ENCODE measurements at regions of chr3 and their contacts with region 1.

Region 1: DNA sequence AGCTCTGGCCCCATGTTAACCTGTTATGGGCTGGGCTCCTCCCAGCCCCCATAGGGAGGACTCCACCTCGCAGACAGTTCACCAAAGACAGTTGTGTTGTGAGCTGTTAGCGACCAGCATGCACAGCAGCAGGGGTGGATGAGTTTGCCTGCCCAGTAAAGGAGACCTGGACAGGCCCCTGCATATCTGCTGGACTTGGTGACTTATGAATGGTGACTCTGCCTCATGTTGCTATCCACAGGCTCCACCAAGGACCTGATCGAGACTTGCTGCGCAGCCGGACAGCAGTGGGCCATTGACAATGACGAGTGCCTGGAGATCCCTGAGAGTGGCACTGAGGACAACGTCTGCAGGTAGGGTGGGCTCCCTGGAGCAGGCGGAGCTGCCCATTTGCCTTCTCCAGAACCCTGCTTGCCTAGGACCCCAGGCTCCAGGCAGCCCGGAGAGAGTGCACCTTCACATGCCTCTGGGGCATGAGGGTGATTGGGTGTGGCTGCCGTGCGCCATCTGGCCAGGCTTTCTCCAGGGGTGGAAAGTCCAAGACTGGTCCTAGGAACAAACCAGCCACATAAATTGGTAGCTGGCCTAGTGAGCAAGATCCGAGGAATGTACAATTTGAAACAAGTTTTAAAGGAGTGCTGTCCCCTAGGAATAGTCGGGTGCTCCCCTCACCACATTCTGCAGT is 59.0 kb downstream of the FBLN2 start:
- DNase-seq: peak in 1 of 2 experiments; percentile 28
- H3K4me3 ChIP-seq: no peak overlapping the region
- H3K27ac ChIP-seq: no peak overlapping the region
- H3K4me1 ChIP-seq: no peaks in the 10 kb centered on the region
- H3K27me3 ChIP-seq: no peaks in the 10 kb centered on the region
- CTCF ChIP-seq: no peak

Region 2: GRCh38 chr3:13593615-13594014 is 14.3 kb before region 1 on chr3:
- CTCF ChIA-PET with region 1: no interaction called
- POLR2A ChIA-PET with region 1: interaction called, 10 read pairs
- intact Hi-C with region 1: no loop called
- DNase-seq: no peak
- H3K4me3 ChIP-seq: no peak overlapping the region
- H3K27ac ChIP-seq: peak overlapping the region; percentile 60
- H3K4me1 ChIP-seq: peaks cover 48% of the 10 kb centered on the region
- H3K27me3 ChIP-seq: no peaks in the 10 kb centered on the region
- CTCF ChIP-seq: no peak

Measured in PC-9 (cell line).